ENCODE measurements at regions of chr10 and their contacts with region 1.

Region 1: GRCh38 chr10:106625751-106626150 is 538.8 kb downstream of the SORCS1 start:
- DNase-seq: no peak
- ATAC-seq: no peak

Region 2: DNA sequence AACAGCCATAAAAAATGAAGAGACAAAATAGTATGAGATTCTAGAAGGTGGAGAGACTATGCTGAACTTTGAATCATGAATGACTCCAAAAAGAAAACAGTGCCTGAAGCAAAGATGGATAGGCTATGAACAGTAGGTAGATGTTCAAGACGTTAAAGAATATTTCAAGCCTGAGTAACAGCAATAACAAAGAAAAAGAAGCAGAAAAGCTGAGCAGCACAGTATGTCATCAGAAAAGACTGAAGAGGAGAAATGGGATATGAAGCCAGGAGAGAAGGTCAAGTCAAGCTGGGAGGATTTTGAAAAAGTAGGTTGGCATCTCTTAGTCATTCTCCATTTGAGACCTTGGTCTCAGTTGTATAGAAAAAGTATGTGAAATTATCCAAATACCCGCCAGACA is 54.3 kb after region 1 on chr10:
- intact Hi-C with region 1: loop called (anchors 2 kb)
- DNase-seq: no peak
- ATAC-seq: no peak

Region 3: GRCh38 chr10:106765241-106765754 is 139.5 kb after region 1 on chr10:
- intact Hi-C with region 1: no loop called
- DNase-seq: no peak
- ATAC-seq: no peak

Region 4: GRCh38 chr10:106947643-106948042 is 321.9 kb after region 1 on chr10:
- intact Hi-C with region 1: no loop called
- DNase-seq: no peak
- ATAC-seq: no peak

Region 5: GRCh38 chr10:108544494-108545120 is 1918.9 kb after region 1 on chr10:
- intact Hi-C with region 1: loop called (anchors 10 kb)
- DNase-seq: peak; percentile 77
- ATAC-seq: peak; percentile 39

Measured in Right ventricle myocardium inferior (tissue), 1 donor.